ENCODE measurements at regions of chr11 and their contacts with region 1.

Region 1: DNA sequence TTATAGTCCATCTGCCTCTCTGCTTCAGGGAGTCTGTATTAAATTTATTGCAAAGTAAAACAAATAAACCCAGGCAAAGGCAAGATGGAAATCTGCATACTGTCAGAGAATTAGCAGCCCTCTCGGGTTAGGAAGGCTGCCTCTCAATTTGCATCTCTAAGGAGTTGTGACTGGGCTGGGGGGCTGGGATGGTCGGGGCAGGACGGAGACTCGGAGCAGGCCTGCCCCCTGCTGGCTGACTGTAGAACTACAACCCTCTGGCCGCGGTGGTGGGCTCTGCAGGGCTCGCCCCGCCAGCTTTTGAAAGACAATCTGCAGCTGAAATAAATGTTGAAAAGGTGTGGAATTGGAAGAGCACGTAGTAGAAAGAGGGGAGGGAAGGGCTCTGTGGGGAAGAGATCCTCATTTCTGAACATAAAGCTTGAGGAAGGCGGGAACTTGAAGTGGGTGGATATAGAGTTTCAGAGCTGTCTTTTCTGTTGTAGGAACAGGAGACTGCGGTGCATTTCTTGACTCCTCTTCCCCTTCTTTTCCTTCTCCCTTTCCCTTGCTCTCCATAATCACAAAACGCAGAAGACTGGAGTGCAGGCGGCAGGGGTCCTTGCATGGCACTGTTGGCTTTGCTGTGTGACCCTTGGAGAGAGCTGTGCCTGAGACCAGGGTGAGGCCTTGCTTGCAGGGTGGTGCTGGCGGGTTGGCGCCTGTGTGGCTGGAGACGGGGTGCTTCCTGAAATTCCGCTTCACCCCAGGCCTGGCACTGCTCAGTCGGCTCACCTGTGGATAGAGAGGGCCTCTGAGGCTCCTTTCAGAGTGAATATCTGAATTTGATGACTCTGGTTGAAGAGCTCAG is 22.6 kb upstream of the PKNOX2 start:
- DNase-seq: peak; percentile 40
- H3K4me3 Mint-ChIP-seq: no peak overlapping the region
- H3K27ac Mint-ChIP-seq: no peak overlapping the region
- H3K4me1 Mint-ChIP-seq: peaks cover 6% of the 10 kb centered on the region
- H3K27me3 Mint-ChIP-seq: no peaks in the 10 kb centered on the region
- CTCF ChIP-seq: peak; percentile 98

Region 2: DNA sequence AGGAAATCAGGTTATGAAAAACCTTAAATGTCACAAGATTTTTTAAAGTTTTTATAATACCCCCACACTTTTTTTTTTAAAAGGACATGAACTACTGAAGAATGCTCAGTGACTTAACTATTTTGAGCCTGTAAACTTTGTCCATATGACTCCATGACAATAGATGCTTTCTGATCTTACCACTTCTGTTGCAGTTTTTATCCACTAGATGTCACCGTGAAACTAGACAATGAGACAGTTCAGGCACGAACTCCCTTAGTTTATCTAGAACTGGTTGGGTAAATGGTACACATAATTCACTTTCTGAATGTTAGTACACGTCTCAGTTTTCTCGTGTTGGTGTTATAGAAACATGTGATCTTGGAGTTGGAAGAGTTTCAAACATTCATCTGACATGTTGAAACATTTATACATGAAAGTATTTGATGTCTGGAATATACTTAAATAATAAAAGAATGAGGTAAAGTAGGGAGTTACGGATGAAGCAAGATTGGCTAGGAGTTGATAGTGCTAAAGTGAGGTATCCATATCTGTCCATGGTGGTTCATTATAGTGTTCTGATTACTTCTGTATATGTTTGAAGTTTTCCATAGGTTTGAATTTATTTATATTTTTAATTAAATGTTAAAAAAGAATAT is 179.8 kb before region 1 on chr11:
- CTCF ChIA-PET with region 1: interaction called, 102 read pairs
- POLR2A ChIA-PET with region 1: no interaction called
- intact Hi-C with region 1: loop called (anchors 1 kb)
- DNase-seq: peak; percentile 85
- H3K4me3 Mint-ChIP-seq: no peak overlapping the region
- H3K27ac Mint-ChIP-seq: no peak overlapping the region
- H3K4me1 Mint-ChIP-seq: no peaks in the 10 kb centered on the region
- H3K27me3 Mint-ChIP-seq: no peaks in the 10 kb centered on the region
- CTCF ChIP-seq: peak; percentile 69

Region 3: GRCh38 chr11:125049164-125049792 is 92.6 kb before region 1 on chr11:
- CTCF ChIA-PET with region 1: interaction called, 10 read pairs
- POLR2A ChIA-PET with region 1: no interaction called
- intact Hi-C with region 1: no loop called
- DNase-seq: no peak
- H3K4me3 Mint-ChIP-seq: no peak overlapping the region
- H3K27ac Mint-ChIP-seq: no peak overlapping the region
- H3K4me1 Mint-ChIP-seq: no peaks in the 10 kb centered on the region
- H3K27me3 Mint-ChIP-seq: no peaks in the 10 kb centered on the region
- CTCF ChIP-seq: no peak

Region 4: GRCh38 chr11:125082611-125083311 is 59.1 kb before region 1 on chr11:
- CTCF ChIA-PET with region 1: interaction called, 10 read pairs
- POLR2A ChIA-PET with region 1: no interaction called
- intact Hi-C with region 1: no loop called
- DNase-seq: peak; percentile 89
- H3K4me3 Mint-ChIP-seq: peak overlapping the region; percentile 68
- H3K27ac Mint-ChIP-seq: peak overlapping the region; percentile 96
- H3K4me1 Mint-ChIP-seq: peaks cover 48% of the 10 kb centered on the region
- H3K27me3 Mint-ChIP-seq: no peaks in the 10 kb centered on the region
- CTCF ChIP-seq: no peak

Region 5: DNA sequence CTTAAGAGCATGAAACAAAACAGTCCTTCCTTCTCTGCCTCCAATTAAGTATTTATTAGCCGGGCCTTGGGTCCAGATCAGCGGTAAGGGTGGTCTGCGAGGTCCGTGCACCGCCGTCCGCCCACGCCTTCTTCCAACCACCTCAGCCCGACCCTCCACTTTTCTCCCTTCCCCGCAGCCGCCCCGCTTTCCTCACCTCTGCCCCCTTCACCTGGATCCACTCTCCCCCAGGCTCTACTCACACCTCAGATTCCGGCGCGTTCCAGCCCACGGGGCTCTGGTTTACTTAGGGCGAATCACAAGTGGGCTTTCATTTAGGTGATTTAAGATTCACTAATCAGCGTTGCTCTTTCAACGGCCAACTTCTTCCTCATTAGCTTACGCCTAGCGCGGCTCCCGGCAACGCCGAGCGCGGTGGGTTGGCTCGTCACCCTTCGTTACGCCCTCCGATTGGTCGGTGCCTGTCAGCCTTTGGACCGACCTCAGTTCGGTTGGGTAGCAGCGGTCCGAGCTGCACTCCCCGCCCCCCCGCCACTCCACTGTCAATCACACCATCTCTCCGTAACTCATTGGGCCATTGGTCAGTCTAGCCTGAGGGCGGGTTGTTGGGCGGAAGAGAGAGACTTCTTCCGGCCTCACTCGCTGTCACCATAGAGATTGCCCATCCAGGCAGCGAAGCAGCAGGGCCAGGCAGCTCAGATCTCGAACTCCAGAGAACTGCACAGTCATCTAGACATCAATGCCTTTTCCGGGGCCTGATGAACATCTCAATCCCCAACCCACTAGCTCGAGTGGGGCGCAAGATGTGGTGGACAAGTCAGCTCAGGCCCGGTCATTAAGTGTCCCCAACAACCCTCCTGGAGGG is 30.3 kb before region 1 on chr11 and contains the start of gene TMEM218:
- CTCF ChIA-PET with region 1: interaction called, 37 read pairs
- POLR2A ChIA-PET with region 1: interaction called, 4 read pairs
- intact Hi-C with region 1: no loop called
- DNase-seq: peak; percentile 99
- H3K4me3 Mint-ChIP-seq: peak within 1 kb of the TSS; percentile 98
- H3K27ac Mint-ChIP-seq: peak within 1 kb of the TSS; percentile 96
- H3K4me1 Mint-ChIP-seq: peaks cover 5% of the 10 kb centered on the region
- H3K27me3 Mint-ChIP-seq: no peaks in the 10 kb centered on the region
- CTCF ChIP-seq: no peak
- total RNA-seq, gene TMEM218: 21.1 and 31.3 TPM in 2 replicates

Region 6: GRCh38 chr11:125154378-125155099 is 12.6 kb after region 1 on chr11:
- CTCF ChIA-PET with region 1: interaction called, 16 read pairs
- POLR2A ChIA-PET with region 1: no interaction called
- intact Hi-C with region 1: no loop called
- DNase-seq: no peak
- H3K4me3 Mint-ChIP-seq: no peak overlapping the region
- H3K27ac Mint-ChIP-seq: no peak overlapping the region
- H3K4me1 Mint-ChIP-seq: no peaks in the 10 kb centered on the region
- H3K27me3 Mint-ChIP-seq: no peaks in the 10 kb centered on the region
- CTCF ChIP-seq: no peak

Region 7: DNA sequence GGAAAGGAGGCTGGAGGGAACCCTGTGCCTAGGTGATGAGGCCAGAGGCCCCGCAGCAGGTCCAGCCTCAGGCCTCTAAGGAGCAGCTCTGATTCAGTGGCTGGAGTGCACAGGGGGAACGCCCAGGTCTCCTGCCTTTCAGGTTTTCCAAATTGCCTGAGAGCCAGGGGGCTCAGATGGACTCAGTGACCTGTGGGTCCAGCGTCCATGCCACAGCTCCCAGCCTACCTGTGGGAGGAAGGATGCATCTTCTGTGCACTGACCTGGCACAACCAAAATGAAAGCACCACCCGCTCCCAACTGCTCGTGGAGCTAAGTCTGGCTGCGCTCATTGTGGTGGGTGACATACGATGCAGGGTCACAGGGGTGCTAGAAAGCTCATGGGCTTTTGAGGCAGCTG is 271.3 kb after region 1 on chr11:
- CTCF ChIA-PET with region 1: interaction called, 13 read pairs
- POLR2A ChIA-PET with region 1: no interaction called
- intact Hi-C with region 1: no loop called
- DNase-seq: no peak
- H3K4me3 Mint-ChIP-seq: no peak overlapping the region
- H3K27ac Mint-ChIP-seq: no peak overlapping the region
- H3K4me1 Mint-ChIP-seq: no peaks in the 10 kb centered on the region
- H3K27me3 Mint-ChIP-seq: peaks cover 31% of the 10 kb centered on the region
- CTCF ChIP-seq: no peak